ENCODE measurements at regions of chr18 and their contacts with region 1.

Region 1: DNA sequence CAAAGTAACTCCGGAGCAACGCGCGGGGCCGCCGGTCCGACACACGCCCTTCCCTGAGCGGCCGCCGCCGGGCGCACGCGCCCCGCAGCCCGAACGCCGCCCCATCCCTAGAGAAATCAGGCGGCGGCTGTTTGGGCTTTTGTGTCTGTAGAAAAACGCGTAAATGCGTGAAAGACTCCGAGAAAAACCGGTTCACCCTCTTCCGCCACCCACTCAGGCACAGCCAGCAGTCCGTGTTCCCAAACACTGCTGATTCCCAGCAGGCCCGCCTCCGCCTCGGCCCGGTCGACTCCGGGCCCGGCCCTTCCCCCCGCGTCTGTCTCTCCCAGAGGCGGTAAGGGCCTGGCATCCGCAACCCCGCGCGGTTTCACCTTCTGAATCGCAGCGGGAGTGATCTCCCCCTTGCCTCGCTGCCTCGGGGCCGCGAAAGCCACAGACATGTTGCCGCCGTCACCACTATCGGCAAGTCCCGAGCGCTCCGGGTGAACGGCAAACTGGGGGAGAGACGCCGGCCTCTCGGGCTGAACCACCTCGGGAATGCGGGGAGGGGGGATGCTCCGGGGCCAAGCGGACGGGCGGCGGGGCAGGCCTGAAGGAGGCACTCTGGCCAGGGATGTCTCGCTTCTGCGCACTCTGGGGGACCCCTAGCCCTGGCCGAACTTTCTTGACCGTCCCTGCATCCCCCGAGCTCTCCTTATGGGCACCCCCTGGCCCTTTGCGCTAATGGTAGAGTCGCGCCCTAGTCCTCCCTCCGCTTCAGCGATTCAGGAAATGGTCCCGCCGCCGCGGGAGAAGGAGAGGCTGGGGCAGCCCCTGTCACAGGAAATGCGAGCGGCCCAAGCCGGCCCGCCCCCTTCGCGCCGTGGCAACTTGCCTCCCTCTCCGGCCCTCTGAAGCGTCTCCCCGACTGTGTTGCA is at the start of gene SS18:
- DNase-seq: peak; percentile 88
- ATAC-seq: peak; percentile 87
- H3K4me3 ChIP-seq: peak within 1 kb of the TSS; percentile 68 to 71
- H3K27ac ChIP-seq: peak within 1 kb of the TSS; percentile 96
- H3K4me1 ChIP-seq: peaks cover 10 to 18% of the 10 kb centered on the region in 2 experiments; a peak in 3 of 4 replicates
- H3K27me3 ChIP-seq: no peaks in the 10 kb centered on the region
- CTCF ChIP-seq: no peak
- POLR2A ChIP-seq: peak; percentile 29
- RAD21 ChIP-seq: no peak
- total RNA-seq, gene SS18: 60.0 TPM

Region 2: DNA sequence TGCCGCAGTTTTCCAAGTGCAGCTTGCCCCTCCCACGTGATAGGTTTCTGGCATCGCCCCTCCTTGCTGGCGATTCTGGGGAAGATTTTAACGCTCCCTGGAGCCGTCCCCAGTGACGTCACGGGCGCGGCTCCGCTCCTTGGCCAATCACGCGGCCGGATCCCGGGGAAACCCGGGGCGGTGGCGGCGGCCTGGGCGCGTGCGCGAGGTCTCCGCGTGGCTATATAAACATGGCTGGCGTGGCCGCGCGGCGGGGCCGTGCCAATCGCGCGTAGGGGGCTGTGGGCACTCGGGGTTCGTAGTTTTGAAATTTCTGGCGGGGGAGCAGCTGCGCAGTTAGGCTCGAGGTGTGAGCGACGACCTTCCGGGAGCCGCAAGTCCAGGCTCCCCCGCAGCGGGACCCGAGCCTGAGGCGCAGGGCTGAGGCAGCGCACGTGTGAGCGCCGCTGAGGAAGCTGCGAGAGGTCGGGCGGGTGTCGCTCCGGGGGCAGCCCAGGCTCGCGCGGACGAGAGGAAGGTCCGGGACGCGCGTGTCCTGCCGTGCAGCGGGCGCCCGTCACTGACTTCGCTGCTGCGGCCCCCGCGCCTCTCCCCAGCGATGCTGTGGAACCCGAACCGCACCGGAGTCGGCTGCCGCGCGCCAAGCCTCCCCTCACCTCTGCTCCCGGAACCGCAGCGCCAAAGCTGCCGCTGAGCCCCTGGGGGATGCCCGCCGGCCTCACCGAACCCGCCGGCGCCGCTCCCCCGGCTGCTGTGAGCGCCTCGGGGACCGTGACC is 136.0 kb after region 1 on chr18 and contains the start of gene TAF4B:
- CTCF ChIA-PET with region 1: no interaction called
- POLR2A ChIA-PET with region 1: no interaction called
- RAD21 ChIA-PET with region 1: no interaction called
- intact Hi-C with region 1: loop called (anchors 5 kb)
- DNase-seq: peak; percentile 90
- ATAC-seq: peak; percentile 93
- H3K4me3 ChIP-seq: peak within 1 kb of the TSS; percentile 69 to 84
- H3K27ac ChIP-seq: peak within 1 kb of the TSS; percentile 77
- H3K4me1 ChIP-seq: peaks cover 11 to 21% of the 10 kb centered on the region in 2 experiments
- H3K27me3 ChIP-seq: no peaks in the 10 kb centered on the region
- CTCF ChIP-seq: no peak
- POLR2A ChIP-seq: peak; percentile 88
- RAD21 ChIP-seq: no peak
- total RNA-seq, gene TAF4B: 17.8 TPM

Region 3: GRCh38 chr18:26356045-26356785 is 265.8 kb after region 1 on chr18:
- CTCF ChIA-PET with region 1: no interaction called
- POLR2A ChIA-PET with region 1: no interaction called
- RAD21 ChIA-PET with region 1: no interaction called
- intact Hi-C with region 1: no loop called
- DNase-seq: no peak
- ATAC-seq: no peak
- H3K4me3 ChIP-seq: no peak overlapping the region
- H3K27ac ChIP-seq: no peak overlapping the region
- H3K4me1 ChIP-seq: no peaks in the 10 kb centered on the region
- H3K27me3 ChIP-seq: no peaks in the 10 kb centered on the region
- CTCF ChIP-seq: no peak
- POLR2A ChIP-seq: no peak
- RAD21 ChIP-seq: no peak

Region 4: DNA sequence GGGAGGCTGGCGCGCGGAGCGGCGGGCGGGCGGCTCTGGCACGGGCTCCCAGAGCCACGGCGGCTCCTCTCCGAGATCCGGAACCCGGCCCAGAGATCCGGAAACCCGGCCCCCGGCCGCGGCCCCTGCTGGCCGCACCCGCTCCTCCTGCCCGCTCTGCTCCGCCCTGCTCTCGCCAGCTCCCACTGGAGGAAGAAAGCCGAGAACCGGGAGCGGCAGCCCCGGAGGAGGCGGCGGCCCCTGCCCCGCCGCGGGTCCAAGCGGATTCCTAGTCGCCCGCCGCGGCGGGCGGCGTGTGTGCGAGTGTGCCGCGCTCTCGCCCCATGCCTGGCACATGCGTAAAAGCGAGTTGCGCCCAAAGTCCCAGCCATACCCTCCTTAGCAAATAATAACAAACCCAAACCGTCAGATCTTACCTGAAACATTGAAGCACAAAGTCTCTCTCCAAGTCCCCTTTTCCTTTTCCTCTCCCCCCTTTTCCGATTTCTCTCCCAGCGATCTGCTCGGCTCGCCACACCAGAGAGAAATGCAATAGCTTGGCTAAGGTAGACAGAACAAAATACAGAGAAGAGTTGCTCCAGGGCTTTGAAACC is 566.7 kb after region 1 on chr18:
- CTCF ChIA-PET with region 1: no interaction called
- POLR2A ChIA-PET with region 1: no interaction called
- RAD21 ChIA-PET with region 1: interaction called in 1 of 2 experiments, 10 read pairs
- intact Hi-C with region 1: no loop called
- DNase-seq: no peak
- ATAC-seq: peak; percentile 72
- H3K4me3 ChIP-seq: peak overlapping the region; percentile 58 to 65
- H3K27ac ChIP-seq: no peak overlapping the region; the same call in 1 of the 2 replicates
- H3K4me1 ChIP-seq: peaks cover 8 to 13% of the 10 kb centered on the region in 2 experiments
- H3K27me3 ChIP-seq: peaks cover 78% of the 10 kb centered on the region
- CTCF ChIP-seq: peak in 1 of 3 experiments; percentile 28; a peak in 1 of 6 replicates
- POLR2A ChIP-seq: no peak
- RAD21 ChIP-seq: no peak

Measured in HCT116 (cell line).